ENCODE measurements at regions of chr14 and their contacts with region 1.

Region 1: GRCh38 chr14:90412058-90412457 is 15.2 kb downstream of the CALM1 start:
- DNase-seq: no peak
- ATAC-seq: no peak
- H3K4me3 ChIP-seq: no peak overlapping the region
- H3K27ac ChIP-seq: no peak overlapping the region
- H3K4me1 ChIP-seq: no peaks in the 10 kb centered on the region
- H3K27me3 ChIP-seq: no peaks in the 10 kb centered on the region
- CTCF ChIP-seq: no peak
- EP300 ChIP-seq: no peak
- POLR2A ChIP-seq: no peak
- RAD21 ChIP-seq: no peak

Region 2: DNA sequence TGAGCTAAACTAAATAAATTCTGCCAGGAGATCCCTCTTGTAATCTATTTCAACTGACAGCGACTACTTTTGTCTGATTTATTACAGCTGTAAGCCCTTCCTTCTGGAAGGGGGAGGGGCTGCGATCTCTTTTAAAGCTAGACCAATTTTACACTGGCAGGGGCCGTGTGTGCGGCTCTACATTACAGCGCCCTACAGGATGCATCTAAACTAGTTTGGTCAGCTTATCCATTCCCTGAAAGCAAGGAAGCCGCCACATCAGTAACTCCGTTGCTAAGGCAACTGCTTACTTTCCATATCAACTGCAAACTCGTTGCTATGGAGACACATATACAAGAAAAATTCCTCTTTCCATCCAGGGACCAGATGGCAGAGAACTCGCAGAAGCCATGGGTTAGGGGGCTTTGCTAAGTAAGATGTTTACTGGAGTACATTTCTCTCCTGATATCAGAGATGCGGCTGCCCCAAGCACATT is 1012.4 kb before region 1 on chr14:
- CTCF ChIA-PET with region 1: no interaction called
- POLR2A ChIA-PET with region 1: interaction called, 10 read pairs
- RAD21 ChIA-PET with region 1: no interaction called
- SMC1A ChIA-PET with region 1: no interaction called
- in situ Hi-C with region 1: no loop called
- intact Hi-C with region 1: no loop called
- DNase-seq: no peak
- ATAC-seq: no peak
- H3K4me3 ChIP-seq: no peak overlapping the region
- H3K27ac ChIP-seq: no peak overlapping the region
- H3K4me1 ChIP-seq: no peaks in the 10 kb centered on the region
- H3K27me3 ChIP-seq: no peaks in the 10 kb centered on the region
- CTCF ChIP-seq: no peak
- EP300 ChIP-seq: no peak
- POLR2A ChIP-seq: no peak
- RAD21 ChIP-seq: no peak

Region 3: DNA sequence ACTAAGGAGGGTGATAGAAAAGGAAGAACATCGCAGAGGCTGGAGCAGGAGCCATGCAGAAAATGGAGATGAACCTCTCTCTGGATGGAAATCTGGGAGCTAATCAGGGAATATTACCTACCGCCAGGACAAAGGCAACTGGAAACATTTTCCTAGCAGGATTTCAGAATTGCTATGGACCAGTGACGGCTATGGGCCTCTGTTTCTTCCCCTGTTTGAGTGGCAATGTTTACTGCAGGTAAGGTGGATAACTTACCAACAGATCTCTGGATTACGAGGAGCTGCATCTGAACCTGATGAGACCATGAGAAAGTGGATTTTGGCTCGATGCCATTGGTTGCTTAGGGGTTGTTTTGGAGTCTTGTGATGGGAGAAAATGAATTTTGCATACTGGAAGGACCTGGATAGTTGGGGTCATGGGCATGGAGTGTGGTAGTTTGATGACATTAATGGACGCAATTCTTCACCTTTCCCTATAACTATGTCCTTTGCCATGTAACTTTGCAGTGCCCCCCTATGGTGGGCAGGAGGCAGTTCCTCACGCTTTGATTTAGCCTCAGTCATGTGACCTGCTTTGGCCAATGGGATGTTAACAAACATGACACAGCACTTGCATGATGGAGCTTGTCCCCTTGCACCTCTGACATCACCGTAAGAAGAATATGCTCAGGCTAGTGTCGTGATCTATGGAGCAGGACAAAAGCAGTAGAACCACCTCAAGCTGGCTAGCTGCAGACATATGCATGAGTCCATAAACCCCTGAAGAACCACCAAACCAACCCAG is 35.9 kb after region 1 on chr14:
- CTCF ChIA-PET with region 1: no interaction called
- POLR2A ChIA-PET with region 1: no interaction called
- RAD21 ChIA-PET with region 1: no interaction called
- SMC1A ChIA-PET with region 1: no interaction called
- in situ Hi-C with region 1: no loop called
- intact Hi-C with region 1: no loop called
- DNase-seq: no peak
- ATAC-seq: no peak
- H3K4me3 ChIP-seq: no peak overlapping the region
- H3K27ac ChIP-seq: no peak overlapping the region
- H3K4me1 ChIP-seq: peaks cover 13% of the 10 kb centered on the region
- H3K27me3 ChIP-seq: no peaks in the 10 kb centered on the region
- CTCF ChIP-seq: no peak
- EP300 ChIP-seq: no peak
- POLR2A ChIP-seq: no peak
- RAD21 ChIP-seq: no peak